ENCODE measurements at regions of chr17 and their contacts with region 1.

Region 1: GRCh38 chr17:39754161-39754951 is 16.6 kb downstream of the GRB7 start:
- DNase-seq: peak; percentile 96 to 99 (median 99)
- H3K4me3 ChIP-seq: peak overlapping the region; percentile 36 to 67
- H3K4me3 Mint-ChIP-seq: peak overlapping the region; percentile 67 to 97 (median 81)
- H3K27ac ChIP-seq: peak overlapping the region; percentile 90
- H3K27ac Mint-ChIP-seq: peak overlapping the region; percentile 96 to 100 (median 98)
- H3K4me1 ChIP-seq: peaks cover 57% of the 10 kb centered on the region
- H3K4me1 Mint-ChIP-seq: peaks cover 44 to 61% (median 53%) of the 10 kb centered on the region in 4 donors
- H3K27me3 ChIP-seq: no peaks in the 10 kb centered on the region
- H3K27me3 Mint-ChIP-seq: no peaks in the 10 kb centered on the region

Region 2: DNA sequence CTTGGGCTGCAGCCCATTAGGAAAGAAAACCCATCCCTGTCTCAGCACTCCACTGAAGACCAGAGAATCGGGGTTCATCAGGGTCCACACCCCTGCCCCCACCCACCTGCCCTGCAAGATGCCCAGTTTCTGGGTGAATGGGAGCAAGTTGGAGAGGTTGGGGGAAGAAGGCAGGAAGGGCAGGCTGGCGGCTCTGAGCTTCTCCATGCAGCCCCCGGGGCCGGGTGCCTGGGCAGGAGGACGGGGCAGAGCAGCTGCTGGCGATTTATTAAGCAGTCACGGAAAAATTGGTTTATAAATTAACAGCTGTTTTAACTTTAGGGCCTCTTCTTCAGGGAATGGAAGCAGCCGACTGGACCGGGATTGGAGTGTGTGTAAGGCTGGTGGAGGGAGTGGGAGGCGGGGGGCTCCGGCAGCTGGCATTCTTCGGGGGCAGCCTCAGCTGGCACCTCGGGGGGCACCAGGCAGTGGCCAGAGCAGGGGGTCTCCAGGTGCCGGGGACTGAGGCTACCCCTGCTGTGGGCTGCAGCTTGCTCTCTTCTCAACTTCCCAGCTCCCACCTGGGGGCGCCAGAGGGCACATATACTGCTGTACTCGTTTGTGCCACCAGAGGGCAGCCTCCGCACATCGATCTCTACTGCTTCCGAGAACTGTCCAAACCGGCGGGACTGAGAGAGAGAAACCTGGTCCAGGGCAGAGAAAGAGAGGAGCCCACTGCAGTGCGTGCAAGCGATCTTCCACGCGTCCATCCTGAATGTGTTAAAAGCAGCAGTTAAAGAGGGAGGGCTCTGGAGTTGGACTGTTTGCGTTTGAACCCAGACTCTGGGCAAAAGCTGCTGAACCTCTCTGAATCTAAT is 132.6 kb before region 1 on chr17:
- CTCF ChIA-PET with region 1: interaction called, 68 read pairs
- POLR2A ChIA-PET with region 1: interaction called, 43 read pairs
- intact Hi-C with region 1: loop called (anchors 1 kb)
- DNase-seq: peak; percentile 82 to 90 (median 84)
- H3K4me3 ChIP-seq: peak overlapping the region in 1 of 2 donors; percentile 50
- H3K4me3 Mint-ChIP-seq: peak overlapping the region; percentile 65 to 85 (median 80)
- H3K27ac ChIP-seq: peak overlapping the region; percentile 4
- H3K27ac Mint-ChIP-seq: peak overlapping the region; percentile 54 to 90 (median 86)
- H3K4me1 ChIP-seq: peaks cover 36% of the 10 kb centered on the region
- H3K4me1 Mint-ChIP-seq: peaks cover 13 to 31% (median 20%) of the 10 kb centered on the region in 4 donors
- H3K27me3 ChIP-seq: peaks cover 14% of the 10 kb centered on the region
- H3K27me3 Mint-ChIP-seq: peaks cover 14 to 18% of the 10 kb centered on the region in 2 donors

Region 3: DNA sequence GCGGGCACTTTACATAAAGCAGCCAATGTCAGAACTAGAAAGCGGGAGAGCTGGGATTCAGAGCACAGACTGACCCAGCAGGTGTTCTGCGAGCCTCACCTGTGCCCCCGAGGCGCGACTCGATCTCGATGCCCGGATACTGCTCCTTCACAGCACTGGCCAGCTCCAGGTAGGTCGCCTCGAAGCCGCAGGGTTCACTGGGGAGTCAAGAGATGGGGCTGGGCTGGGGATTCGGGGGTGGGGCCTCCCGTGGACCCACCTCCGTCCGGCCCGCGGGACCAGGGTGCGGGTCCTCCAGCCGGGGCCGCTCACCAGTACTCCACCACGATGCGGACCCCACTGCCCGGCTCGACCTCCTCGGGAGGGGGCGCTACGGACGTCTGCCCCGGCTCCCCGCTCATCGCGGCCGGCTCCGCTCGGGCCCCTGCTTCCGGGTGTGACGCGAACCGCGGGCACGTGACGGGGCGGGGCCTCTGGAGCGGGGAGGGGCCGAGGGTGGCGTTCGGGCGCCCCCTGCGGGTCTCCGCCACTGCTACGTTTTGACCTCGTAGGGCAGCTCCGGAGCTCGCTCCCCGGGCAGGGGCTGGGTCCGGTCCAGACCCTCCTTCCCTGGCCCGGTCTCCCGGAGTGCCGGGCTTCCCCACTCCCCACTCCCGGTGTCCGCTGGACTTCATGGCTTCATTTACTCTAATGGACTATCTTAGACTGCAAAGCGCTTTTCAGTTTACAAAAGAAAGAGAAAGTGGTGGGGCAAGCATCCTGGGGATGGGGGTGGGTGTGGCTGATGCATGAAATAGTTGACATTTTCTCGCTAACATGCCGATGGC is 24.0 kb before region 1 on chr17 and contains the start of gene MIEN1:
- CTCF ChIA-PET with region 1: interaction called, 36 read pairs
- POLR2A ChIA-PET with region 1: interaction called, 59 read pairs
- intact Hi-C with region 1: loop called (anchors 1 kb)
- DNase-seq: peak; percentile 87 to 97 (median 93)
- H3K4me3 ChIP-seq: peak within 1 kb of the TSS; percentile 92 to 94
- H3K4me3 Mint-ChIP-seq: peak within 1 kb of the TSS; percentile 90 to 94 (median 92)
- H3K27ac ChIP-seq: peak within 1 kb of the TSS; percentile 91
- H3K27ac Mint-ChIP-seq: peak within 1 kb of the TSS; percentile 86 to 95 (median 93)
- H3K4me1 ChIP-seq: peaks cover 22% of the 10 kb centered on the region
- H3K4me1 Mint-ChIP-seq: peaks cover 6 to 33% (median 12%) of the 10 kb centered on the region in 4 donors
- H3K27me3 ChIP-seq: no peaks in the 10 kb centered on the region
- H3K27me3 Mint-ChIP-seq: no peaks in the 10 kb centered on the region
- total RNA-seq, gene MIEN1: 35.8 TPM

Region 4: GRCh38 chr17:39794249-39794970 is 40.1 kb after region 1 on chr17:
- CTCF ChIA-PET with region 1: interaction called, 5 read pairs
- POLR2A ChIA-PET with region 1: interaction called, 72 read pairs
- intact Hi-C with region 1: loop called (anchors 2 kb)
- DNase-seq: peak; percentile 50 to 67 (median 58)
- H3K4me3 ChIP-seq: no peak overlapping the region
- H3K4me3 Mint-ChIP-seq: peak overlapping the region in 7 of 8 donors; percentile 40 to 82 (median 73)
- H3K27ac ChIP-seq: peak overlapping the region; percentile 54
- H3K27ac Mint-ChIP-seq: peak overlapping the region; percentile 83 to 97 (median 91)
- H3K4me1 ChIP-seq: peaks cover 75% of the 10 kb centered on the region
- H3K4me1 Mint-ChIP-seq: peaks cover 56 to 85% (median 70%) of the 10 kb centered on the region in 4 donors
- H3K27me3 ChIP-seq: no peaks in the 10 kb centered on the region
- H3K27me3 Mint-ChIP-seq: no peaks in the 10 kb centered on the region

Region 5: DNA sequence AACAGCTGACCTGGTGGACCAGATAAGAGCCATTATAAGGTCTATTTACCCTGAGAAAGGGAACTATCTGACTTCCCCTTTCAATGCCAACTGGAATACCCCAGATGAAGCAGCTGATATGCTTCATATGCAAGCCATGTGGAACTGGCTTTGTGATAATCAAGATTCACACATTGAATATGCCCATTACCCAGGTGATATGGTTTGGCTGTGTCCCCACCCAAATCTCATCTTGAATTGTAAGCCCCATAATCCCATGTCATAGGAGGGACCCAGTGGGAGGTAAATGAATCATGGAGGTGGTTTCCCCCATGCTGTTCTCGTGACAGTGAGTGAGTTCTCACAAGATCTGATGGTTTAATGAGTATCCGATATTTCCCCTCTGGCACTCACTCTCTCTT is 67.7 kb after region 1 on chr17:
- CTCF ChIA-PET with region 1: interaction called, 6 read pairs
- POLR2A ChIA-PET with region 1: interaction called, 45 read pairs
- intact Hi-C with region 1: loop called (anchors 2 kb)
- DNase-seq: peak in 1 of 5 donors; percentile 44
- H3K4me3 ChIP-seq: no peak overlapping the region
- H3K4me3 Mint-ChIP-seq: no peak overlapping the region
- H3K27ac ChIP-seq: peak overlapping the region; percentile 66
- H3K27ac Mint-ChIP-seq: peak overlapping the region; percentile 81 to 98 (median 94)
- H3K4me1 ChIP-seq: peaks cover 51% of the 10 kb centered on the region
- H3K4me1 Mint-ChIP-seq: peaks cover 36 to 61% (median 45%) of the 10 kb centered on the region in 4 donors
- H3K27me3 ChIP-seq: no peaks in the 10 kb centered on the region
- H3K27me3 Mint-ChIP-seq: no peaks in the 10 kb centered on the region

Region 6: DNA sequence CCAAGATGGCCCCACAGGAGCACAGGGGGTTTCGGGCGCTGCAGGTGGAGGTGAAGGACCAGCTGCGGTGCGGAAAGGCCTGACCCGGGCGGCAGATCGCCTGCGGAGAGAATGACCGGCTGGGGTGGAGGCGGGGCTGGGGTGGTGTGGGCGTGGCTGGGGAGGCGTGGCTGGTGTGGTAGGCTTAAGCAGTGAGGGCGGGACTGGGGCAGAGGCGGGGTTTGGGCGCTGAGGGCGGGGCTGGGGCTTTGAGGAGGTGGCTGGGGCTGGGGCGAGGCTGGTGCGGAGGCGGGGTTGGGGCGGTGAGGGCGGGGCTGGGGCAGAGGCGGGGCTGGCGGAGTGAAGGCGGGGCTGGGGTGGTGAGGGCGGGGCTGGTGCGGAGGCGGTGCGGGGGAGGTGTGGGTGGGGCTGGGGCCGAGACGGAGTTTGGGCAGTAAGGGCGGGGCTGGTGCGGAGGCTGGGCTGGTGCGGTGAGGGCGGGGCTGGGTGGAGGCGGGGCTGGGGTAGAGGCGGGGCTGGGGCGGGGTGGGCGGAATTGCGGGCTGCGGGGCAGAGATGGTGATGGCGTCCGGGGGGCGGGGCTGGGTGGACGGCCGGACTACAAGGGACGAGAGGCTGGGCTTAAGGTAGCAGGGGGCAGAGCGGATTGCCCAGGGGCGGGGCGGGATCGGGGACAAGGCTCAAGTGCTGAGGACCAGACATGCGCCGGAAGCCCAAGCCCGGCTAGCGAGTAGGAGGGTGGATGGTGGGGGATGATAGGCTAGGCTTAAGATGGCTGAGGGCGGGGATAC is 198.5 kb after region 1 on chr17:
- CTCF ChIA-PET with region 1: no interaction called
- POLR2A ChIA-PET with region 1: no interaction called
- intact Hi-C with region 1: loop called (anchors 10 kb)
- DNase-seq: peak; percentile 90 to 99 (median 90)
- H3K4me3 ChIP-seq: peak overlapping the region; percentile 61 to 78
- H3K4me3 Mint-ChIP-seq: peak overlapping the region; percentile 79 to 90 (median 86)
- H3K27ac ChIP-seq: peak overlapping the region; percentile 34
- H3K27ac Mint-ChIP-seq: peak overlapping the region; percentile 71 to 94 (median 89)
- H3K4me1 ChIP-seq: peaks cover 12% of the 10 kb centered on the region
- H3K4me1 Mint-ChIP-seq: peaks cover 6 to 23% (median 9%) of the 10 kb centered on the region in 4 donors
- H3K27me3 ChIP-seq: no peaks in the 10 kb centered on the region
- H3K27me3 Mint-ChIP-seq: no peaks in the 10 kb centered on the region

Measured in CD4-positive, alpha-beta memory T cell (primary cell).